Activated CD4-positive, alpha-beta T cell treated with anti-CD3 and anti-CD28 coated beads, Interleukin-2, amount 10 ng/mL, durations not matched to agents 24 days and 14 days (primary cell): ENCODE measurements at regions of chr10 and their contacts with region 1.

Region 1: GRCh38 chr10:92592761-92593618 is at the start of gene KIF11:
- DNase-seq: peak; percentile 99
- H3K4me3 Mint-ChIP-seq: peak within 1 kb of the TSS; percentile 99
- H3K27ac Mint-ChIP-seq: peak within 1 kb of the TSS; percentile 98
- H3K4me1 Mint-ChIP-seq: peaks cover 52% of the 10 kb centered on the region
- H3K27me3 Mint-ChIP-seq: no peaks in the 10 kb centered on the region
- total RNA-seq, gene KIF11: 39.0 and 39.9 TPM in 2 replicates

Region 2: GRCh38 chr10:91923371-91924211 is 669.4 kb before region 1 on chr10 and contains the start of gene BTAF1:
- intact Hi-C with region 1: loop called (anchors 1 kb)
- DNase-seq: peak; percentile 97
- H3K4me3 Mint-ChIP-seq: peak within 1 kb of the TSS; percentile 87
- H3K27ac Mint-ChIP-seq: peak within 1 kb of the TSS; percentile 99
- H3K4me1 Mint-ChIP-seq: peaks cover 28% of the 10 kb centered on the region
- H3K27me3 Mint-ChIP-seq: peaks cover 2% of the 10 kb centered on the region
- total RNA-seq, gene BTAF1: 63.9 and 67.1 TPM in 2 replicates

Region 3: DNA sequence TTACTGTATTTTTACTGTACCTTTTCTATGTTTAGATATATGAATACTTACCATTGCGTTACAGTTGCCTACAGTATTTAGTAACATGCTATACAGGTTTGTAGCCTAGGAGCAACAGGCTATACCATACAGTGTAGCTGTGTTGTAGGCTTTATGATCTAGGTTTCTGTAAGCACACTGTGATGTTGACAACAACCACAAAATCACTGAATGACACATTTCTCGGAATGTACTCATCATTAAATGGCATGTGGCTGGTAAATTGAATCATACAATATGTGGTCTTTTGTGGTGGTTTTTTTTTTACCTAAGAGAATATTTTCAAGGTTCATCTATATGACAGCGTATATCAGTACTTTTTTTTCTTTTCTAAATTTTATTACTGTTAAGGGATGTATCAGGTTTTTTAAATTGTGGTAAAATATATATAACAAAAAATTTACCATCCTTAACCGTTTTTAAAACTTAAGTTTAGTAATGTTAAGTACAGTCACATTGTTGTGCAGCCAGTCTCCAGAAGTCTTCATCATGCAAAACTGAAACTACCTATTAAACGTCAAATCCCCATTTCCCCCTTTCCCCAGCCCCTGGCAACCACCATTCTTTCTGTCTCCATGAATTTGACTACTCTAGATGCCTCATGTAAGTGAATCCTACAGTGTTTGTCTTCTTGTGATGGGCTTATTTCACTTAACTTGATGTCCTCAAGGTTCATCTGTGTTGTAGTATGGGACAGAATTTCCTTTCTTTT is 647.9 kb before region 1 on chr10:
- intact Hi-C with region 1: no loop called
- DNase-seq: peak; percentile 73
- H3K4me3 Mint-ChIP-seq: peak overlapping the region; percentile 60
- H3K27ac Mint-ChIP-seq: peak overlapping the region; percentile 84
- H3K4me1 Mint-ChIP-seq: peaks cover 22% of the 10 kb centered on the region
- H3K27me3 Mint-ChIP-seq: no peaks in the 10 kb centered on the region

Region 4: DNA sequence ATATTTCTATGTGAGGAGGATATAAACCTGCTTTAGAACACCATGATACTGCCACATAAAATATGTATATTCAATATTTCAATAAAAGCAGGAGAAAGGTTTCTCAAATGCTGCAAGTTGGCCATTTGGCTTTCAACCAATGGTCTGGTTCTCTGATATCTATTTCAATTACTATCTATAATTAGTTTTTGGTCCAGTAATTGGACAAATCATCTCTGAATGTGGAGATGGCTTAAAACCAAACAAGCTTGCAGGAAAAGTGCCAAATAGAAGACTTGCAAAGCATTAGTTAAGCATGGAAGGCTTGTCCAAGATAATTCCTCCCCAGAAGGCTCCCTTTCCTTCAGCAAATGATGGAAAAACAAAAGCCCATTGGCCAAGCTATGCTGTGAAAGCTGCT is 442.2 kb before region 1 on chr10:
- intact Hi-C with region 1: no loop called
- DNase-seq: no peak
- H3K4me3 Mint-ChIP-seq: no peak overlapping the region
- H3K27ac Mint-ChIP-seq: no peak overlapping the region
- H3K4me1 Mint-ChIP-seq: no peaks in the 10 kb centered on the region
- H3K27me3 Mint-ChIP-seq: no peaks in the 10 kb centered on the region

Region 5: DNA sequence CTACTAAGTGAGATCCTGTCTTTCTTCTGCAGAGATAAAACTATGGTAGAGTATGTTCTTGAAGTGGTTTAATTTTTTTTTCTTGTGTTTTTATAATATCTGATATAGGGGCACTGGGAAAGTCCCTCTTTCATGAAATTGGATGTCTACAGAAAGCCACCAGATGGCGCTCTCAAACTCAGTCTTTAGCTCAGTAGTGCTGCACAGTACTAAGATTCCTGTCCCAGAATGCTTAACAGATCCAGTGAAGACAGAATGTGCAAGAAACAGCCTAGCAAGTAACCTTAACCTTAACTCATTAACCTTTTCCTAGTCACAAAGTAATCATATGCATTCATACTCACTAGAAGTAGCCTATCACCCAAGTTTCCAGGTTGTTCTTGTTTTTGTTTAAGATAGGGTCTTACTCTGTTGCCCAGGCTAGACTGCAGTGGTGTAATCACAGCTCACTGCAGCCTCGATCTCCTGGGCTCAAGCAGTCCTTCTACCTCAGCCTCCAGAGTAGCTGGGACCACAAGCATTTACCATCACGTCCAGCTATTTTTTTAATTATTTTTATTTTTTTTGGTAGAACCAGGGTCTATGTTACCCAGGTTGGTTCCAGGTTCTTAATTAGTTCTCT is 75.8 kb before region 1 on chr10:
- intact Hi-C with region 1: loop called (anchors 5 kb)
- DNase-seq: peak; percentile 89
- H3K4me3 Mint-ChIP-seq: no peak overlapping the region
- H3K27ac Mint-ChIP-seq: no peak overlapping the region
- H3K4me1 Mint-ChIP-seq: peaks cover 4% of the 10 kb centered on the region
- H3K27me3 Mint-ChIP-seq: no peaks in the 10 kb centered on the region

Region 6: DNA sequence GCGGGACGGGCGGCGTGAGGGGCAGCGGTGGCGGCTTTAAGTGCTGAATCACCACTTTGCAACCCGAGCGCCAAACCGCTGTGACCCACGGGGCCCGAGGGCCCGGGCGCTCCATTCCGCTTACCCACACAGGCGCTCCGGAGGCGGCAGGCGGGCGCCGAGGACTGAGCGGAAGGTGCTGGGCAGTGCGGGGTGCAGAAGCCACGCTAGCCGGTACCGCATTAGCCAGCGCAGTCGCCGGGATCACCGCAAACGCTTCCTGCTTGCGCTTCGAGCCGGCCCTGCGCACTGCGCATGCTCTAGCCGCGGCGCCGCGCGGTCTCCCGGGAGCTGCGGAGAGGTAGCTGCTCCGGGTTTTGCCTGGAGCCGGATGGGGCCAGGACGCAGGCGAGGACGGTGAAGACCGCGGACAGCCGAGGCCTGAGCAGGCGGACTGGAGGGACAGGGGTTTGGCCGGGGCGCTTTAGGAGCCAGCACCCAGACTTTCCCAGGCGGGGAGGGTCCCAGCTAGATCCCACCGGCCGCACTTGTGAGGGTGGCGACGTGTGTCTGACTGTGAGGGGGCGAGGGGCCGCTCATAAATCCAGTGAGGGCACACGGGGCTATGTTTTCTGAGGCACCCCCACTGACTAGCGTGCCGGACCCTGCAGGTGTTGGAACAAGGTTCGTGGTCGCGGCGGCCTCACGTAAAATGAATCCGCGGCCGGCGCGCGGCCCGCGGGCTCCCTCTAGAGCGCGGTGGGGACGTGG is 19.0 kb before region 1 on chr10 and contains the start of gene IDE:
- intact Hi-C with region 1: loop called (anchors 1 kb)
- DNase-seq: peak; percentile 96
- H3K4me3 Mint-ChIP-seq: peak within 1 kb of the TSS; percentile 79
- H3K27ac Mint-ChIP-seq: peak within 1 kb of the TSS; percentile 92
- H3K4me1 Mint-ChIP-seq: peaks cover 29% of the 10 kb centered on the region
- H3K27me3 Mint-ChIP-seq: no peaks in the 10 kb centered on the region
- total RNA-seq, gene IDE: 47.9 and 50.2 TPM in 2 replicates

Region 7: DNA sequence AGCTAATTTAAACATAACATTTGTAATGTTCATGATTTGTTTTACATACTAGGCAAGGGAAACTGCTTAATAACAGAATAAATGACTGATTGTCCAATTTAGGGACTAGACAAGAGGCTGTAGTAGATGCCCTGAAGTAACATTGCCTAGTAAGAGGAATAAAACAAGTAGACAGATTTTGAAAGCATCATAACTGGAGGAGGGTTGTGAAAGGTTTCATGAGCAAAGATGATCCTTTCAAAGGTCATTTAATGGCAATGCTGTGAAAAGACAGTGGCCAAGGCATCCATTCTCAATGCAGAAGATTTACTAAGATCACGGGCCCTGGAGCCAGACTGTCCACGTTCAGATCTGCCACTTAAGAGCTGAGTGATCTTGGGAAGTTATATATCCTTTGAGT is 51.9 kb after region 1 on chr10:
- intact Hi-C with region 1: loop called (anchors 2 kb)
- DNase-seq: no peak
- H3K4me3 Mint-ChIP-seq: no peak overlapping the region
- H3K27ac Mint-ChIP-seq: no peak overlapping the region
- H3K4me1 Mint-ChIP-seq: peaks cover 6% of the 10 kb centered on the region
- H3K27me3 Mint-ChIP-seq: no peaks in the 10 kb centered on the region

Region 8: GRCh38 chr10:92689663-92690210 is 96.7 kb after region 1 on chr10 and contains the start of gene HHEX:
- intact Hi-C with region 1: loop called (anchors 5 kb)
- DNase-seq: peak; percentile 78
- H3K4me3 Mint-ChIP-seq: peak within 1 kb of the TSS; percentile 70
- H3K27ac Mint-ChIP-seq: no peak within 1 kb of the TSS
- H3K4me1 Mint-ChIP-seq: peaks cover 16% of the 10 kb centered on the region
- H3K27me3 Mint-ChIP-seq: peaks cover 72% of the 10 kb centered on the region
- total RNA-seq, gene HHEX: 0.19 and 0.31 TPM in 2 replicates